HEK293T (cell line): ENCODE measurements at regions of chr5 and their contacts with region 1.

Region 1: GRCh38 chr5:79857714-79858409 is 133.2 kb downstream of the MTX3 start:
- DNase-seq: peak; percentile 61

Region 2: DNA sequence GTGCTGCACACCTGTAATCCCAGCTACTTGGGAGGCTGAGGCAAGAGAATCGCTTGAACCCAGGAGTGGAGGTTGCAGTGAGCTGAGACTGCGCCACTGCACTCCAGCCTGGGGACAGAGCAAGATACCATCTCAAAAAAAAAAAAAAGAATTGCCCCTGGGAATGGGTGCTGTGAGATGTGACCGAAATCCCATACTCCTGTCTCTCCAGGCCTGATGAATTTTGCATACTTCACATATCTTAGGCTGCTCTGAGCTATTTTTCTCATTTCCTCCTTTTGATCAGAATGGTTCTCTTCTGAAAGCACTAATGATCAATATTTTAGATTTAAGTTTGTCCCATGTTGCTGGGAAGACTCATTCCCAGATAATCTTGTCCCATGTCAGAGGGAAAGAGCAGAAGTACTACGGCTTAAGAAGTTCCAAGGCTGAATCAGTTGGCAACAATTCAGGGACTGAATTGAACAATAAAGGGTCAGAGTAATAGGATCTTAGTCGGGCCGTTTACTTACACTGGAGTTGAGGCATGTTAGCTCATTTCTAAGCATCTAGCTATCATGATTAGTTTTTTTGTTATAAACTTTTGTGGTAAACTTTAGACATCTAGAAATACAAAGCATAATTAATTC is 289.8 kb before region 1 on chr5:
- CTCF ChIA-PET with region 1: interaction called, 10 read pairs
- POLR2A ChIA-PET with region 1: no interaction called
- DNase-seq: no peak